Activated T-helper 2 cell treated with anti-CD3 and anti-CD28 coated beads, Interferon-gamma antibody, Interleukin-2, Interleukin-4, amounts not matched to agents 10 μg/mL and 5 μg/mL and 100 μg/mL, durations not matched to agents 14 hours and 24 hours and 36 hours (primary cell): ENCODE measurements at regions of chr14 and their contacts with region 1.

Region 1: GRCh38 chr14:80996049-80996901 is 40.9 kb downstream of the TSHR start:
- DNase-seq: no peak
- H3K4me3 Mint-ChIP-seq: no peak overlapping the region
- H3K27ac Mint-ChIP-seq: no peak overlapping the region
- H3K4me1 Mint-ChIP-seq: peaks cover 9% of the 10 kb centered on the region
- H3K27me3 Mint-ChIP-seq: peaks cover 51% of the 10 kb centered on the region

Region 2: GRCh38 chr14:81062816-81063215 is 66.5 kb after region 1 on chr14:
- intact Hi-C with region 1: loop called (anchors 5 kb)
- DNase-seq: no peak
- H3K4me3 Mint-ChIP-seq: no peak overlapping the region
- H3K27ac Mint-ChIP-seq: no peak overlapping the region
- H3K4me1 Mint-ChIP-seq: no peaks in the 10 kb centered on the region
- H3K27me3 Mint-ChIP-seq: peaks cover 7% of the 10 kb centered on the region

Region 3: DNA sequence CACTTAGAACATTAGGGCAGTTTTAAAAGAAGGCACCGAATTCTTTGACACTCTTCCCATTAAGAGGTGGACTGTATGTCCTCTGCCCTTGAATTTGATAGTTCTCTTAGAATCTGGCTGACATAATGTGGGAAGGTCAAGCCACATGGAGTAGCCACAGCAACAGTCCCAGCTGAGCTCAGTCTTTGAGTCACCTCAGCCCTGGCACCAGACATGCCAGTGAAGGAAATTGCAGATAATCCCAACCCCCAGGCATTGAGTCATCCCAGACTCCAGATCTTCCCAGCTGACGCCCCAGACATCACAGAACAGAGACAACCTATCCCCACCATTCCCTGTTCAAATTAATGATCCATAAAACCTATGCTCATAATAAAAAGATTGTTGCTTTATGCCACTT is 141.0 kb after region 1 on chr14:
- intact Hi-C with region 1: no loop called
- DNase-seq: no peak
- H3K4me3 Mint-ChIP-seq: no peak overlapping the region
- H3K27ac Mint-ChIP-seq: no peak overlapping the region
- H3K4me1 Mint-ChIP-seq: no peaks in the 10 kb centered on the region
- H3K27me3 Mint-ChIP-seq: peaks cover 2% of the 10 kb centered on the region

Region 4: GRCh38 chr14:81164167-81164774 is 168.0 kb after region 1 on chr14:
- intact Hi-C with region 1: loop called (anchors 1 kb)
- DNase-seq: peak; percentile 37
- H3K4me3 Mint-ChIP-seq: no peak overlapping the region
- H3K27ac Mint-ChIP-seq: no peak overlapping the region
- H3K4me1 Mint-ChIP-seq: peaks cover 27% of the 10 kb centered on the region
- H3K27me3 Mint-ChIP-seq: no peaks in the 10 kb centered on the region

Region 5: DNA sequence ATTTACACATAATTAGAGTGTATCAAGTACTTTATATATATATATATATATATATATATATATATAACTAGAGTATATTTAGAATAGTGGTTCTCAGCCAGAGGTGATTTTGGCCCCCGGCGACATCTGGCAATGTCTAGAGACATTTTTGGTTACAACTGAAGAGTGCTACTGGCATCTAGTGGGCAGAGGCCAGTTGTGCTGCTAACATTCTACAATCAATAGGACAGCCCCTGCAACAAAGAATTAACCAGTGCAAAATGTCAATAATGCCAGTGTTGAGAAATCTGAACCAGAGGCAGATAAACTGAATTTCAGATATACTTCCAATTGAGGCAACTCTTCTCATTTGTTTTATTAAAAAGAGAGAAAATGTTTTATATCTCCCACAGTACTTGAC is 215.6 kb after region 1 on chr14:
- intact Hi-C with region 1: loop called (anchors 5 kb)
- DNase-seq: no peak
- H3K4me3 Mint-ChIP-seq: no peak overlapping the region
- H3K27ac Mint-ChIP-seq: peak overlapping the region; percentile 1
- H3K4me1 Mint-ChIP-seq: peaks cover 38% of the 10 kb centered on the region
- H3K27me3 Mint-ChIP-seq: no peaks in the 10 kb centered on the region